Pancreas (tissue), 10 donors: ENCODE measurements at regions of chr15 and their contacts with region 1.

Region 1: GRCh38 chr15:54289590-54290136 is 311.4 kb downstream of the UNC13C start:
- DNase-seq: no peak
- ATAC-seq: no peak
- H3K4me3 ChIP-seq: no peak overlapping the region
- H3K27ac ChIP-seq: no peak overlapping the region
- H3K4me1 ChIP-seq: no peaks in the 10 kb centered on the region
- H3K27me3 ChIP-seq: no peaks in the 10 kb centered on the region
- CTCF ChIP-seq: no peak

Region 2: GRCh38 chr15:54227569-54227968 is 62.1 kb before region 1 on chr15:
- intact Hi-C with region 1: loop called in 1 of 3 experiments (anchors 10 kb)
- DNase-seq: no peak
- ATAC-seq: no peak
- H3K4me3 ChIP-seq: no peak overlapping the region
- H3K27ac ChIP-seq: no peak overlapping the region
- H3K4me1 ChIP-seq: no peaks in the 10 kb centered on the region
- H3K27me3 ChIP-seq: no peaks in the 10 kb centered on the region
- CTCF ChIP-seq: no peak